ENCODE measurements at regions of chr2 and their contacts with region 1.

Region 1: GRCh38 chr2:207352978-207353671 is 176.6 kb upstream of the CREB1 start:
- DNase-seq: no peak
- H3K4me3 ChIP-seq: no peak overlapping the region
- H3K27ac ChIP-seq: no peak overlapping the region
- H3K4me1 ChIP-seq: peaks cover 7% of the 10 kb centered on the region
- H3K27me3 ChIP-seq: no peaks in the 10 kb centered on the region
- CTCF ChIP-seq: no peak
- POLR2A ChIP-seq: no peak

Region 2: GRCh38 chr2:207258263-207258991 is 94.7 kb before region 1 on chr2:
- intact Hi-C with region 1: loop called (anchors 10 kb)
- DNase-seq: no peak
- H3K4me3 ChIP-seq: no peak overlapping the region
- H3K27ac ChIP-seq: peak overlapping the region; percentile 42
- H3K4me1 ChIP-seq: peaks cover 26% of the 10 kb centered on the region
- H3K27me3 ChIP-seq: no peaks in the 10 kb centered on the region
- CTCF ChIP-seq: no peak
- POLR2A ChIP-seq: no peak

Measured in vagina (tissue), 2 donors.